Ovary (tissue), 10 donors: ENCODE measurements at regions of chr11 and their contacts with region 1.

Region 1: DNA sequence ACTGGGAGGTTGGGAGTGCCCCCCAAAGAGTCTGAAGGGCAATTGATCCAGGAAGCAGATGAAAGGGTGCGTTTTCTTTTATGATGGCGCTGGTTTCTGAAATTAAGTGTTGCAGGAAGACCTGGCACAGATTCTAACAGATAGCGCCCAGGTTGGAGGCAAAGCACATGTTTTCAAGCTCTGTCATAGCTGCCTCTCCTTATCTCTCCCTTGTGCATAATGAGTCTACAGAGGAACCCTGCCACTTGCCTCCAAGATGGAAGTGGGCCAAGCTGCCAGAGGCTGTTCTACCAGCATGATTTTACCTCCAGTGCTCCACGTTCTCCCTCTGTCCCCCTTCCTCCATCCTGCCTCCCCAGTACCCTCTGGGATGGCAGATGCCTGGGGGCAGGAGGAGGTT is 30.0 kb upstream of the TLCD5 start:
- DNase-seq: no peak
- H3K4me3 ChIP-seq: no peak overlapping the region
- H3K27ac ChIP-seq: no peak overlapping the region
- H3K4me1 ChIP-seq: no peaks in the 10 kb centered on the region
- H3K27me3 ChIP-seq: no peaks in the 10 kb centered on the region
- CTCF ChIP-seq: no peak
- EP300 ChIP-seq: no peak
- POLR2A ChIP-seq: no peak

Region 2: GRCh38 chr11:120172054-120172911 is 122.8 kb before region 1 on chr11:
- intact Hi-C with region 1: loop called (anchors 2 to 5 kb)
- DNase-seq: peak; percentile 71 to 82 (median 79)
- H3K4me3 ChIP-seq: no peak overlapping the region
- H3K27ac ChIP-seq: no peak overlapping the region
- H3K4me1 ChIP-seq: no peaks in the 10 kb centered on the region
- H3K27me3 ChIP-seq: no peaks in the 10 kb centered on the region
- CTCF ChIP-seq: peak; percentile 82 to 91 (median 86)
- EP300 ChIP-seq: no peak
- POLR2A ChIP-seq: no peak

Region 3: DNA sequence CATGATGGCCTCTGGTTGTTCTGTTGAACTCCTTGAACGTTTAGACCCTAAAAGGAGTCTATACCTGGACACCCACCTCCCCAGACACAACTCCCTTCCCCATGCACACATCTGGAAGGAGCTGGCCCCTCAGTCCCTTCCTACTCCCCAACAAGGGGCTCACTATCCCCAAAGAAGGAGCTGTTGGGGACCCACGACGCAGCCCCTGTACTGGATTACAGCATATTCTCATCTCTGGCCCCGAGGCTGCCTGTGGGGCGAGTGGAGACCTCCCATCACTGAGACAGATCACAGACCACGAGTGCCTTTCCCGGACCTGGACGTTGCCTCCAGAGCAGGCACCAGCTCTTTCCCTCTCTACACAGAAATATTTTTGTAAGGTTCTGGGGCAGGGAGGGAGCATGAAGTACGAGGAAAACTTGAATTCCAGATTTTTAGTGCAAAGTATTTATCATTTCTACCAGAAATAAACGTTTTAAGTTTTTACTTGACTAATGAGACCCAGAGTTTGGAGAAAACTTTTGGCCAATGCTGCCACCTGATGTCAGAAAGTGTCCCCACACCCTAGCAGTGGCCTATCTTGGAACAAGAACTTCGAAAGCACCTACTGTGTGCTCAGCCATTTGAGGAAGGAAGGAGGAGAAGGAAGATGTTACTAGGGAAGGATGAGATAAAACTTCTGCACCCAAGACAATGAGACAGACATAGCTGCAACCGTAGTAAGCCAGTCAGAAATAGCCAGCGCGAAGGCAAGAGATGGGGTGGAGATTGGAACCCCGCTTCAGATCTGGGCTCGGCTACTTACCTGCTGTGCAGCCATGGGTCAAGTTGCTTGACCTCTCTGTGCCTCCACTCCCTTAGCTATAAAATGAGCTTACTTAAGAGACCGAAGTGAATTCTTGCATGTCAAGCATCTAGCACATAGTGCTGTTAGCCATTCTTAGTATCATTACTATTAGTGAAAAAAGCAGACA is 65.3 kb before region 1 on chr11:
- intact Hi-C with region 1: loop called in 1 of 4 experiments (anchors 5 kb)
- DNase-seq: peak in 1 of 5 donors; percentile 60
- H3K4me3 ChIP-seq: no peak overlapping the region
- H3K27ac ChIP-seq: peak overlapping the region in 1 of 2 donors; percentile 52
- H3K4me1 ChIP-seq: peaks cover 8% of the 10 kb centered on the region
- H3K27me3 ChIP-seq: no peaks in the 10 kb centered on the region
- CTCF ChIP-seq: peak; percentile 52 to 70 (median 67)
- EP300 ChIP-seq: no peak
- POLR2A ChIP-seq: no peak

Region 4: GRCh38 chr11:120239713-120240640 is 55.1 kb before region 1 on chr11 and contains the start of gene POU2F3:
- intact Hi-C with region 1: loop called in 3 of 4 experiments (anchors 2 to 10 kb)
- DNase-seq: no peak
- H3K4me3 ChIP-seq: no peak within 1 kb of the TSS
- H3K27ac ChIP-seq: no peak within 1 kb of the TSS
- H3K4me1 ChIP-seq: peaks cover 4% of the 10 kb centered on the region
- H3K27me3 ChIP-seq: no peaks in the 10 kb centered on the region
- CTCF ChIP-seq: no peak
- EP300 ChIP-seq: no peak
- POLR2A ChIP-seq: no peak
- total RNA-seq, gene POU2F3: 0.20 to 1.0 (median 0.23) TPM in 5 of 7 donors, not detected in the others

Region 5: DNA sequence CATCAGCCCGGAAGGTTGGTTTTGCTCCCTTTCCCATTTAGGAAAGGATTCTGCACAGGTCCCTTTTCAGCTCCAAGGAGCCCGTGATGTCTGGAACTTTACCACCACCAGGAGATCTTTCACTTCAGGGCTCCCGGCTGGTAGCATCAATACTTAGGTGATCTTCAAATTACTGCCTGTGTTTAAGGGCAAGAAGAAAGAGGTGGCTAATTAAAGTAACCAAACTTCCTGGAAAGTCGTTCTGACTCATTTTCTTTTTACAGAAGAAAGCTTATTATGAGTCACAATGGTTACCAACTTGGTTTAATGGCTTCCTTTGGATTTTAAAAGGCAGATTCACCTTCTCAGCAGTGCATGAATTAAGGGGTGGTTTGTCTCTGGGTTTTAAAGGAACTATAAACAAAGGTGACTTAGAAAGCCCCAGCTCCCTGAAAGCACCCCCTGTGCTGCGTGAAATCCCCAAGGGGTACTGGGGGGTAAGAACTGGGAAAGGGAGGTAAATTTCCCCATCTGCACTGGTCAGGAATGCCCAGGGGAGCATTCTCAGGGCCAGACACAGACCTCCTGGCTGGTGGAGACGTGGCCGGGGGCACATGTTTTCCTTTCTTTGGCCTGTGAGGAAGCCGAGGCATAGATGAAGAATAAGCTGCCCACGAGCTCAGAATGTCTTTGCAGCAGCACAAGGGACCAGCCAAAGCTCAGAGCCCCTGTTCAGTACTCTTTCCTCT is 46.4 kb before region 1 on chr11:
- intact Hi-C with region 1: loop called in 2 of 4 experiments (anchors 5 to 10 kb)
- DNase-seq: no peak
- H3K4me3 ChIP-seq: no peak overlapping the region
- H3K27ac ChIP-seq: no peak overlapping the region
- H3K4me1 ChIP-seq: no peaks in the 10 kb centered on the region
- H3K27me3 ChIP-seq: no peaks in the 10 kb centered on the region
- CTCF ChIP-seq: no peak
- EP300 ChIP-seq: no peak
- POLR2A ChIP-seq: no peak